Pancreas (tissue), 10 donors: ENCODE measurements at regions of chr4 and their contacts with region 1.

Region 1: GRCh38 chr4:163544407-163545038 is 50.0 kb downstream of the TMA16 start:
- DNase-seq: peak; percentile 21 to 80 (median 47)
- ATAC-seq: peak; percentile 74 to 93 (median 88)
- H3K4me3 ChIP-seq: no peak overlapping the region
- H3K27ac ChIP-seq: no peak overlapping the region
- H3K4me1 ChIP-seq: no peaks in the 10 kb centered on the region
- H3K27me3 ChIP-seq: no peaks in the 10 kb centered on the region
- CTCF ChIP-seq: peak; percentile 73 to 93 (median 80)

Region 2: DNA sequence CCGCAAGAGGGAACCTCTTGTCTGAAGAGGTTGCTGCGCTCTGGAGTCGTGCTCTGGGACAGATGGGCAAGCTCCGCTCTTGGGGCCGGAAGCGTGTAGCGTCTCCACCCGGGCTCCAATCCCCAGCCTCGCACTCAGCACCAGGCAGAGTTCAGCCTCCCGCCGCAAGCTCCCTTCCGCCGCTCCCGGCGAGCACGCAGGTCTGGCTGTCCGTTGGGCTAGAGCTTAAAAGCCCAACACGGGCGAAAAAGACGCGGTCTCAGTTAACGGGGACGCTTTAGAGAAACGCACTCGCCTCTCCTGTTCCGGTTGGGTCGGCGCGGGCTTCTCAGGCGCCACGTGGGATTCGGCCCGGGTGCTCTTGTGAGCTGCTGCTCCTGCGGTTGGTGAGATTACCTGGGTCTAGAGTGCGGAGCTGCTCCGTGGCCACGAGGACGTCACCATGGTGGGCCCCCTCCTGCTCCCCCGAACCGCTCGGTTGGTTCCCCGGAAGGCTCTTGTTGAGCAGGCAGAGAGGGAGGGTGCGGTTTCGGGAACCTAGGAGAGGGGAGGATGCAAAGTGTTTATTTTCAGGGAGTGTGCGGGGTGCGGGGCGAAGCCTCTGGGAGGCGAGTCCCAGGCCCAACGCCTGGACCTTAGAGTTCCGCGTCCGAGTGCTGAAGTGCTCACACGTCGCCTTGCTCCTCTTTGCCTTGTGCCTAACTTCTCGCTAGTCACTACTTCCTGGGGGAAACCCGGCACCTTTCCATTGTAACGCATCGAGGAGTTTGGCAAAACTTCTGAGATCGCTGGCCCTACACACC is 50.0 kb before region 1 on chr4 and contains the start of gene TMA16:
- intact Hi-C with region 1: loop called in 1 of 3 experiments (anchors 10 kb)
- DNase-seq: peak; percentile 81 to 92 (median 86)
- ATAC-seq: peak; percentile 94 to 98 (median 96)
- H3K4me3 ChIP-seq: peak within 1 kb of the TSS; percentile 61 to 83 (median 74)
- H3K27ac ChIP-seq: peak within 1 kb of the TSS; percentile 73 to 95 (median 80)
- H3K4me1 ChIP-seq: peaks cover 0 to 15% (median 13%) of the 10 kb centered on the region in 3 donors
- H3K27me3 ChIP-seq: no peaks in the 10 kb centered on the region
- CTCF ChIP-seq: no peak
- total RNA-seq, gene TMA16: 9.1 to 18.3 (median 12.0) TPM

Region 3: DNA sequence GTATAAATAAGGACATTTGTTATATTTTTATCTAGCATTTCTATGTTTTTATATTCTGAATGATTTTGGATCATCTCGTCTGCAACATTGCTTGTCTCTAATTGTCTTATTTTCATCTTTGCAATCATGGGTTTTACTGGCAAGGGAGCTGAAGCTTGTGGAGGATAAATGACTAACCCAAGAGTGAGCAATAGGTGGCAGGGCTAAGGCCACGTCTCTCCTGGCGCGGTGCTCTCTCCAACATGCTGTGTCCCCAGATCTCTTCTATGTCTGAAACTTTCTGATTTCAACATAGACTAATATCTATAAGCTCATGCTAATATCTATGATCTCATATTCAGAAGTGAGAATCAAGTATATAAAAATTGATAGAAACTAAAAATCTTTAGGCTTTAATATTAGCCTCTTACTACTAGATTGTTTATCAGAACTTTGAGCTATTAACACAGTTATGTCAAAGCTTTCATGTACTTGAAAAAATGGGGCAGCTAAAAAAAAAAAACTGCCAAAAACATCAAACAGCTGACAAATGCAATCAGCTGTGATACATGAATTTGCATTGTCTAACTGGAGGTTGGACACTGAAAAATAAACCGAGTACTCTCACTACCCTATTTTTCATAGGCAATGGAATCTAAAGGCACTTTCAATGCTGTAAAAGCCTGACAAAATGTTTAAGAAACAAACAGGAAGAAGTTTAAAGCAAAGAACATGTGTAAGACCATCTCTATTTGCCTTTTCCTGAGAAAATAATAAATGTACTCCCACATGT is 119.1 kb after region 1 on chr4:
- intact Hi-C with region 1: no loop called
- DNase-seq: no peak
- ATAC-seq: peak in 1 of 4 donors; percentile 27
- H3K4me3 ChIP-seq: no peak overlapping the region
- H3K27ac ChIP-seq: no peak overlapping the region
- H3K4me1 ChIP-seq: no peaks in the 10 kb centered on the region
- H3K27me3 ChIP-seq: no peaks in the 10 kb centered on the region
- CTCF ChIP-seq: no peak